B cell (primary cell): ENCODE measurements at regions of chr11 and their contacts with region 1.

Region 1: GRCh38 chr11:269146-269890 is 8.9 kb upstream of the NLRP6 start:
- DNase-seq: peak; percentile 96
- ATAC-seq: peak; percentile 66
- H3K4me3 ChIP-seq: peak overlapping the region; percentile 62 to 85 (median 72)
- H3K4me3 Mint-ChIP-seq: peak overlapping the region; percentile 91
- H3K27ac ChIP-seq: peak overlapping the region; percentile 96 to 98
- H3K27ac Mint-ChIP-seq: peak overlapping the region; percentile 94
- H3K4me1 ChIP-seq: peaks cover 25 to 32% of the 10 kb centered on the region in 2 donors
- H3K4me1 Mint-ChIP-seq: peaks cover 34% of the 10 kb centered on the region
- H3K27me3 ChIP-seq: no peaks in the 10 kb centered on the region
- H3K27me3 Mint-ChIP-seq: no peaks in the 10 kb centered on the region
- CTCF ChIP-seq: peak; percentile 33

Region 2: GRCh38 chr11:207208-207862 is 62.0 kb before region 1 on chr11 and contains the starts of genes BET1L and RIC8A:
- CTCF ChIA-PET with region 1: interaction called, 4 read pairs
- POLR2A ChIA-PET with region 1: interaction called, 23 read pairs
- intact Hi-C with region 1: loop called (anchors 1 kb)
- DNase-seq: peak; percentile 99
- ATAC-seq: peak; percentile 79
- H3K4me3 ChIP-seq: peak within 1 kb of the TSS; percentile 87 to 98 (median 91)
- H3K4me3 Mint-ChIP-seq: peak within 1 kb of the TSS; percentile 98
- H3K27ac ChIP-seq: peak within 1 kb of the TSS; percentile 96 to 98
- H3K27ac Mint-ChIP-seq: peak within 1 kb of the TSS; percentile 100
- H3K4me1 ChIP-seq: peaks cover 26 to 43% of the 10 kb centered on the region in 2 donors
- H3K4me1 Mint-ChIP-seq: peaks cover 53% of the 10 kb centered on the region
- H3K27me3 ChIP-seq: no peaks in the 10 kb centered on the region
- H3K27me3 Mint-ChIP-seq: no peaks in the 10 kb centered on the region
- CTCF ChIP-seq: no peak
- total RNA-seq, gene BET1L: 69.1 and 72.2 TPM in 2 replicates
- total RNA-seq, gene RIC8A: 102 and 110 TPM in 2 replicates

Region 3: DNA sequence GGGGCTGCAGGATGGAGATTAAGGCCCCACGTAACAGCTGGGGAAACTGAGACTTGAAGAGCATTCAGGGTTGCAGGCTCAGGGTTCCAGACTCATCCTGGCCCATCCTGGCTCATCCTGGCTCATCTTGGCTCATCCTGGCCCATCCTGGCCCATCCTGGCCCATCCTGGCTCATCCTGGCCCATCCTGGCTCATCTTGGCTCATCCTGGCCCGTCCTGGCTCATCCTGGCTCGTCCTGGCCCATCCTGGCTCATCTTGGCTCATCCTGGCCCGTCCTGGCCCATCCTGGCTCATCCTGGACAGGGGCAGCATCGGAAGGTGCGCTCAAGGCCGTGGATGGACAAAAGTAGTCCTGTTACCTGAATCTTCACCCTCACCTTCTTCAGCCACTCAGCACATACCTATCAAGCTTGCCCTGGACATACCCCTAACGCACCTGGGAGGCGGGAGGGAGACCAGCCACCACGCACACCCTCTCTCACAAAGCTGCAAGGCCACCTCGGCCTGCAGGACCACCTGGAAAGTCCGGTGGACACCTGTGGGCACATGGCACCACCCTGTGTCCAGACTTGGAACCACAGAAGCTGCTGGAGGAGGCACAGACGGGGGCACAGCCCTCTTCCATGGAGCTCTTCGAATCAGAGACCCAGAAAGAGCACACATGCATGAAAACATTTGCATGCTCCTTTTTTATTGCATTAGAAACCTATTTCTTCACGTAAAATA is 11.4 kb before region 1 on chr11:
- CTCF ChIA-PET with region 1: interaction called, 11 read pairs
- POLR2A ChIA-PET with region 1: interaction called, 34 read pairs
- intact Hi-C with region 1: no loop called
- DNase-seq: no peak
- ATAC-seq: peak; percentile 36
- H3K4me3 ChIP-seq: no peak overlapping the region
- H3K4me3 Mint-ChIP-seq: peak overlapping the region; percentile 44
- H3K27ac ChIP-seq: no peak overlapping the region
- H3K27ac Mint-ChIP-seq: peak overlapping the region; percentile 78
- H3K4me1 ChIP-seq: peaks cover 17 to 22% of the 10 kb centered on the region in 2 donors
- H3K4me1 Mint-ChIP-seq: peaks cover 33% of the 10 kb centered on the region
- H3K27me3 ChIP-seq: no peaks in the 10 kb centered on the region
- H3K27me3 Mint-ChIP-seq: no peaks in the 10 kb centered on the region
- CTCF ChIP-seq: no peak

Region 4: DNA sequence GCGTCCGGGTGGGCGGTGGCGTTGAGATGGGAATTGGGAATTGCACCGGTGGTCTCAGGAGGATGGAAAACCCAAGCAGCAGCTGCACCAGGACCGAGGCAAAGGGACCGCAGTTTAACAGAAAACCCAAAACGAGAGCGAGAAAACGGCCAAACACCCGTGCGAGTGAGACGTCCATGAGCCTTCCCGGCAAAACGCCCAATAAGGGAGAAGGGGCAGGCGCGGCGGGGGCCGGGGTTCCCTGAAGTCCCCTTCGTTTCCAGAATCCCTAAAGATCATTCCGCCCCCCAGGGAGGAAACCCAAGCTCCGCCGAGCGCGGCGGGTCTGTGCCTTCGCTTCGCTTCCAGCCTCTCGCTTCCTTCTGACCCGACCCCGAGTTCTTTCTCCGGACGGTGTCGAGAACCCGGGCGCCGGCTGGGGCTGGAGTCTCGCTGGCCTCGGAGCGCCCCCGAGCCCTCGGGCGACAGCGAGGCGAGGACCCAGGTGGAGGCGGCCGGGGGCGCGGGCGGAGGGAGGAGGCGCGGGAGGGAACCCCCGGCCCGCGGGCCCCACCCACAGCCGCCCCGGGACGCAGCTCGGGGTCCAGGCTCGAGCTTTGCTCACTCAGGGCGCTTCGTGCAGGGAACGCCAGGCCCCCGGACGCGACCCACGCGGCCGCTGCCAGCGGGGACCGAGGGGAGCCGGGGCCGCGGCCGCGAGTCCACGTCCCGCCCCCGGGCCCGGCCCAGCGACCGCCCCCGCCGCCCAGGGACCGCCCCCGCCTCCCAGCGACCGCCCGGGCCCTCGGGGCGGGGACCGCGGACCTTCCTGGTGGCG is 19.2 kb after region 1 on chr11 and contains the start of gene PGGHG:
- CTCF ChIA-PET with region 1: interaction called, 4 read pairs
- POLR2A ChIA-PET with region 1: interaction called, 11 read pairs
- intact Hi-C with region 1: loop called (anchors 2 kb)
- DNase-seq: peak; percentile 64
- ATAC-seq: peak; percentile 91
- H3K4me3 ChIP-seq: peak within 1 kb of the TSS; percentile 62 to 78 (median 72)
- H3K4me3 Mint-ChIP-seq: peak within 1 kb of the TSS; percentile 89
- H3K27ac ChIP-seq: peak within 1 kb of the TSS in 1 of 2 donors; percentile 55
- H3K27ac Mint-ChIP-seq: peak within 1 kb of the TSS; percentile 83
- H3K4me1 ChIP-seq: peaks cover 18 to 25% of the 10 kb centered on the region in 2 donors
- H3K4me1 Mint-ChIP-seq: peaks cover 20% of the 10 kb centered on the region
- H3K27me3 ChIP-seq: peaks cover 0 to 25% (median 6%) of the 10 kb centered on the region in 4 experiments
- H3K27me3 Mint-ChIP-seq: peaks cover 13% of the 10 kb centered on the region
- CTCF ChIP-seq: no peak
- total RNA-seq, gene PGGHG: 159 and 169 TPM in 2 replicates

Region 5: GRCh38 chr11:355581-356458 is 86.5 kb after region 1 on chr11:
- CTCF ChIA-PET with region 1: interaction called, 3 read pairs
- POLR2A ChIA-PET with region 1: interaction called, 11 read pairs
- intact Hi-C with region 1: loop called (anchors 1 kb)
- DNase-seq: peak; percentile 85
- ATAC-seq: peak; percentile 56
- H3K4me3 ChIP-seq: peak overlapping the region in 4 of 5 experiments; percentile 41 to 53 (median 43)
- H3K4me3 Mint-ChIP-seq: peak overlapping the region; percentile 88
- H3K27ac ChIP-seq: peak overlapping the region; percentile 81 to 85
- H3K27ac Mint-ChIP-seq: peak overlapping the region; percentile 90
- H3K4me1 ChIP-seq: peaks cover 13 to 20% of the 10 kb centered on the region in 2 donors
- H3K4me1 Mint-ChIP-seq: peaks cover 18% of the 10 kb centered on the region
- H3K27me3 ChIP-seq: no peaks in the 10 kb centered on the region
- H3K27me3 Mint-ChIP-seq: no peaks in the 10 kb centered on the region
- CTCF ChIP-seq: no peak

Region 6: DNA sequence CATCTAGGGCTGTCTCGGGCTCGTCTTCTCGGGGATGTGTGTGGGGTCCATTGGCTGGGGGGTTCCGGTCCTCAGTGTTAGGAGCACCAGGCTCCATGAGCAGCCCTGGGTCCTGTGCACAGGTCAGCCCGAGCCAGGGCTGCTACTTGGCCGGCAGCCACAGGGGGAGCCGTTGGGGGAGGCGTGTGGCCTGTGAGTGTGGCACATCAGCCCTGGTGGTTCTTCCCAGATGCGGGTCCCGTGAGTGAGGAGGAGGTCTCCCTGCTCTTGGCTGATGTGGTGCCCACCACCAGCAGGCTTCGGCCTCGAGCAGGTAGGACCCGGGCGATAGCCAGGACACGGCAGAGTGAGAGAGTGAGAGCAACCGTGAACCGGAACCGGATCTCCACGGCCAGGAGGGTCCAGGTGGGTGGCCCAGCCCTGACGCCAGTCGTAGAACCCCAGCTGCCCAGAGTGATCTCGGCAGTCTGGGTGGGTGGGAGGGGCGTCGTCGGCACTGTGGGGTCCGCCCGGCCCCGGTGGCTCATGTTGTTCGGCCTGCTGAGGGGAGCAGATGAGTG is 327.9 kb after region 1 on chr11:
- CTCF ChIA-PET with region 1: no interaction called
- POLR2A ChIA-PET with region 1: no interaction called
- intact Hi-C with region 1: no loop called
- DNase-seq: no peak
- ATAC-seq: no peak
- H3K4me3 ChIP-seq: no peak overlapping the region
- H3K4me3 Mint-ChIP-seq: no peak overlapping the region
- H3K27ac ChIP-seq: no peak overlapping the region
- H3K27ac Mint-ChIP-seq: no peak overlapping the region
- H3K4me1 ChIP-seq: no peaks in the 10 kb centered on the region
- H3K4me1 Mint-ChIP-seq: no peaks in the 10 kb centered on the region
- H3K27me3 ChIP-seq: no peaks in the 10 kb centered on the region
- H3K27me3 Mint-ChIP-seq: no peaks in the 10 kb centered on the region
- CTCF ChIP-seq: no peak